Naive thymus-derived CD4-positive, alpha-beta T cell (primary cell): ENCODE measurements at regions of chr10 and their contacts with region 1.

Region 1: GRCh38 chr10:112375721-112376395 is 1.9 kb downstream of the ACSL5 start:
- DNase-seq: peak; percentile 33 to 70 (median 59)
- ATAC-seq: peak; percentile 87
- H3K4me3 ChIP-seq: peak overlapping the region; percentile 89
- H3K4me3 Mint-ChIP-seq: peak overlapping the region; percentile 95 to 100 (median 100)
- H3K27ac ChIP-seq: peak overlapping the region; percentile 95
- H3K27ac Mint-ChIP-seq: peak overlapping the region; percentile 97 to 100 (median 99)
- H3K4me1 ChIP-seq: peaks cover 11 to 21% of the 10 kb centered on the region in 2 donors
- H3K4me1 Mint-ChIP-seq: peaks cover 36 to 72% (median 61%) of the 10 kb centered on the region in 7 donors
- H3K27me3 ChIP-seq: no peaks in the 10 kb centered on the region
- H3K27me3 Mint-ChIP-seq: no peaks in the 10 kb centered on the region

Region 2: GRCh38 chr10:112183329-112184051 is 192.4 kb before region 1 on chr10 and contains the start of gene GPAM:
- CTCF ChIA-PET with region 1: no interaction called
- POLR2A ChIA-PET with region 1: interaction called, 11 read pairs
- intact Hi-C with region 1: loop called (anchors 1 kb)
- DNase-seq: peak; percentile 93 to 100 (median 97)
- ATAC-seq: peak; percentile 100
- H3K4me3 ChIP-seq: peak within 1 kb of the TSS; percentile 88
- H3K4me3 Mint-ChIP-seq: peak within 1 kb of the TSS; percentile 87 to 98 (median 92)
- H3K27ac ChIP-seq: peak within 1 kb of the TSS; percentile 75
- H3K27ac Mint-ChIP-seq: peak within 1 kb of the TSS; percentile 84 to 99 (median 94)
- H3K4me1 ChIP-seq: peaks cover 7 to 8% of the 10 kb centered on the region in 2 donors
- H3K4me1 Mint-ChIP-seq: peaks cover 13 to 34% (median 27%) of the 10 kb centered on the region in 7 donors
- H3K27me3 ChIP-seq: no peaks in the 10 kb centered on the region
- H3K27me3 Mint-ChIP-seq: peaks cover 0 to 11% (median 0%) of the 10 kb centered on the region in 5 donors
- total RNA-seq, gene GPAM: 3.7 to 11.3 (median 6.6) TPM

Region 3: GRCh38 chr10:112389147-112389822 is 13.4 kb after region 1 on chr10:
- CTCF ChIA-PET with region 1: interaction called, 3 read pairs
- POLR2A ChIA-PET with region 1: interaction called, 26 read pairs
- intact Hi-C with region 1: loop called (anchors 1 kb)
- DNase-seq: peak in 8 of 9 donors; percentile 14 to 51 (median 23)
- ATAC-seq: peak; percentile 94
- H3K4me3 ChIP-seq: no peak overlapping the region
- H3K4me3 Mint-ChIP-seq: peak overlapping the region in 7 of 10 donors; percentile 25 to 56 (median 43)
- H3K27ac ChIP-seq: no peak overlapping the region
- H3K27ac Mint-ChIP-seq: peak overlapping the region; percentile 31 to 75 (median 73)
- H3K4me1 ChIP-seq: peaks cover 8 to 30% of the 10 kb centered on the region in 2 donors
- H3K4me1 Mint-ChIP-seq: peaks cover 44 to 78% (median 65%) of the 10 kb centered on the region in 7 donors
- H3K27me3 ChIP-seq: no peaks in the 10 kb centered on the region
- H3K27me3 Mint-ChIP-seq: no peaks in the 10 kb centered on the region

Region 4: DNA sequence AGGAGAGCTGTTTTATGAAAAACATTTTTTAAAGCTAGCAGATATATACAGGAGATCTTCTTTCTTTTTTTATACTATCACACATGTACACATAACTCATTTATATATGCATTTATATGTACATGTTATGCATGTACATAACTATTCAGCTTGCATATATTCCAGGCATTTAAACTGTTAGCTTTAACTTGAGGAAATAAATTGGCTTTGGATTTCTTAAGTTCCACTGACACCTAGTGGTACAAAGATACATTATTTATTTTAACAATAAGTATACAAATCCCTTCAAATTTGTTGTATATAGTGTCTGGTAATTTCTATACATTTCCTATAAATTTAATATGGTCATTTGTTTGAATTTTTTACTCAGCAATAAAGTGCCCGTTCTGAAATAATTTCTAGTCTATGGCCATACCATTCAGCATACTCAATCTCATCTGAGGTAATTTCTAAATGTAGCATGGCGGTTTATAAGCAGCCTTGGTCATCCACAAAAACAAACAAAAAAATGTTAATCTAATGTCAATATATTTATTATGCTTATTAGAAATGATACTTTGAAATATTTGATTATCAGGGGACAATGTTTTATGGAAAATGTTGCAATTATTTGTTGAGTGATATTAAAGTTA is 59.2 kb after region 1 on chr10:
- CTCF ChIA-PET with region 1: interaction called, 11 read pairs
- POLR2A ChIA-PET with region 1: interaction called, 4 read pairs
- intact Hi-C with region 1: no loop called
- DNase-seq: peak in 2 of 9 donors; percentile 5 to 27
- ATAC-seq: no peak
- H3K4me3 ChIP-seq: no peak overlapping the region
- H3K4me3 Mint-ChIP-seq: no peak overlapping the region
- H3K27ac ChIP-seq: no peak overlapping the region
- H3K27ac Mint-ChIP-seq: peak overlapping the region in 1 of 9 donors; percentile 78
- H3K4me1 ChIP-seq: no peaks in the 10 kb centered on the region
- H3K4me1 Mint-ChIP-seq: peaks cover 0 to 5% (median 3%) of the 10 kb centered on the region in 7 donors
- H3K27me3 ChIP-seq: no peaks in the 10 kb centered on the region
- H3K27me3 Mint-ChIP-seq: no peaks in the 10 kb centered on the region

Region 5: GRCh38 chr10:112446855-112447711 is 71.2 kb after region 1 on chr10 and contains the starts of genes VTI1A and ZDHHC6:
- CTCF ChIA-PET with region 1: no interaction called
- POLR2A ChIA-PET with region 1: interaction called, 22 read pairs
- intact Hi-C with region 1: loop called (anchors 1 kb)
- DNase-seq: peak; percentile 70 to 89 (median 84)
- ATAC-seq: peak; percentile 95
- H3K4me3 ChIP-seq: peak within 1 kb of the TSS; percentile 85
- H3K4me3 Mint-ChIP-seq: peak within 1 kb of the TSS; percentile 92 to 100 (median 96)
- H3K27ac ChIP-seq: peak within 1 kb of the TSS; percentile 90
- H3K27ac Mint-ChIP-seq: peak within 1 kb of the TSS; percentile 95 to 100 (median 99)
- H3K4me1 ChIP-seq: peaks cover 23 to 25% of the 10 kb centered on the region in 2 donors
- H3K4me1 Mint-ChIP-seq: peaks cover 31 to 81% (median 65%) of the 10 kb centered on the region in 7 donors
- H3K27me3 ChIP-seq: no peaks in the 10 kb centered on the region
- H3K27me3 Mint-ChIP-seq: no peaks in the 10 kb centered on the region
- total RNA-seq, gene VTI1A: 40.2 to 56.8 (median 51.4) TPM
- total RNA-seq, gene ZDHHC6: 34.3 to 66.3 (median 50.9) TPM

Region 6: DNA sequence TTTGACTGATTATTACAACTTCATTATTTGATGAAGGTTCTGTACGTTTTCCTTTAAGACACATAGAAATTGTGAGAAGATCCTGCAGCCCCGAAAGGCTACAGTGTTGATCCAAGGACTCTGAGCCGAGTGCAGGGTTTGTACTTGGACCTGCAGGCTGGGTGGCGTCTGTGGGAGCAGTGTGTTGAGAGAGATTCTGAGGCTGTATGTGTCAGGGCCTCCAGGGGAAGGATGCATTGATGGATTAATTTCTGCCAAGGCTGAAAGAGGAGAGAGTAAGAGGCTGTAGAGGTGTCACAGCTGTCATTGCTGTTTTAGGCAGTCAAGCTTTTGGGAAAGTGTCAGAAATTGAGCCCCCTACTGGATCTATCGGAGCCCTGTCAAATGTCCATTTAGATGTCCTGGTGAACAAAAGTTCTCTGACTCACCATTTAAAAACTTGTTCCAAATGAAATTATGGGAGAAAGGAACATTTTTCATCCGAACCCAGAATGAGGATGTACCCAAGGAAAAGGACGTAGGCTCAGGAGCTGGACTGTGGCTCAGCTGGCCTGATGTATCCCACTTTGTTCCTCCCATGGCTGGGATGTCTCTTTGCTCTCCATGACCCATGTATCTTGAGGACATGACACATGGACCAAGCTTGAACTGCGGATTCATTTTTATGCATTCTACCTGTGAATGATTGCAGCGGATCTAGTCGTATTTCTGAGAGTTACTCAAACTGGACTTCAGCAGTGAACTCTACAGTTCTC is 676.4 kb after region 1 on chr10:
- CTCF ChIA-PET with region 1: no interaction called
- POLR2A ChIA-PET with region 1: no interaction called
- intact Hi-C with region 1: no loop called
- DNase-seq: no peak
- ATAC-seq: no peak
- H3K4me3 ChIP-seq: no peak overlapping the region
- H3K4me3 Mint-ChIP-seq: no peak overlapping the region
- H3K27ac ChIP-seq: no peak overlapping the region
- H3K27ac Mint-ChIP-seq: no peak overlapping the region
- H3K4me1 ChIP-seq: peaks cover 15 to 18% of the 10 kb centered on the region in 2 donors
- H3K4me1 Mint-ChIP-seq: peaks cover 0 to 38% (median 30%) of the 10 kb centered on the region in 7 donors
- H3K27me3 ChIP-seq: no peaks in the 10 kb centered on the region
- H3K27me3 Mint-ChIP-seq: peaks cover 0 to 27% (median 11%) of the 10 kb centered on the region in 5 donors